AG04449 (cell line): ENCODE measurements at regions of chr1 and their contacts with region 1.

Region 1: GRCh38 chr1:225700164-225700740 is 47.3 kb upstream of the ENAH start:
- DNase-seq: peak; percentile 98
- H3K4me3 ChIP-seq: peak overlapping the region; percentile 7
- CTCF ChIP-seq: no peak

Region 2: DNA sequence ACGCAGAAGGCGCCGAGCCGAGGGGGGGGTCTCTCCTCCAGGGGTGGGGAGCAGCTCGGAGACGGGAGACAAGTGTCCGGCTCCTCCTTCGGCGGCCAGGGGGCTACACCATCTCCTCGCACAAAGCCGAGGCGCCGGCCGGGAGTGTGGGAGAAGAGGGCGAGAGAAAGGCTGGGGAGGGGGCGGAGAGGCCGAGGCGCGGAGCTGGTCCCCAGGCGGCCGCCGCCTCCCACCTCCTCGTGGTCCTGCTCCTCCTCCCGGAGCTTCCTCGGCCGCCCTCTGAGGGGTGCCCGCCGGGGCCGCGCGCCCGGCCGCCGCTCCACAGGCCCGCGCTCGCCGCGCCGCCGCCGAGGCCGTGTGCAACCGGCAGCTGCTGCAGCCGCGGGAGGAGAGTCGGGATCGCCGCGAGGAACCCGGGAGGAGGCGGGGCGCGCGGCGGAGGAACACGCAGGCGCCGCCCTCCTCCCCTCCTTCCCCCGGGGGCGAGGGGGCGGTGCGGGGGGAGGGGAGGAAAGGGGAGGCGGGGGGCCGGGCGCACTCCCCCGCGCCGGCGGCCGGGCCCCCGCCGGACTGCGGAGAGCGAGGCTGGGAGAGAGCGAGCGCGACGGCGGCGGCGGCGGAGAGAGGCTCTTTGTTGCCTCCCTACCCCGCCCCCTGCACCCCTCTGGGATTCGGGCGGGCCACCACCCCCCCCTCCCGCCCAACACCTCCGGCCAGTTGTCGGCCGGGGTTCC is 47.4 kb before region 1 on chr1 and contains the start of gene ENAH:
- CTCF ChIA-PET with region 1: no interaction called
- POLR2A ChIA-PET with region 1: interaction called, 15 read pairs
- DNase-seq: no peak
- H3K4me3 ChIP-seq: peak within 1 kb of the TSS; percentile 85
- CTCF ChIP-seq: no peak

Region 3: DNA sequence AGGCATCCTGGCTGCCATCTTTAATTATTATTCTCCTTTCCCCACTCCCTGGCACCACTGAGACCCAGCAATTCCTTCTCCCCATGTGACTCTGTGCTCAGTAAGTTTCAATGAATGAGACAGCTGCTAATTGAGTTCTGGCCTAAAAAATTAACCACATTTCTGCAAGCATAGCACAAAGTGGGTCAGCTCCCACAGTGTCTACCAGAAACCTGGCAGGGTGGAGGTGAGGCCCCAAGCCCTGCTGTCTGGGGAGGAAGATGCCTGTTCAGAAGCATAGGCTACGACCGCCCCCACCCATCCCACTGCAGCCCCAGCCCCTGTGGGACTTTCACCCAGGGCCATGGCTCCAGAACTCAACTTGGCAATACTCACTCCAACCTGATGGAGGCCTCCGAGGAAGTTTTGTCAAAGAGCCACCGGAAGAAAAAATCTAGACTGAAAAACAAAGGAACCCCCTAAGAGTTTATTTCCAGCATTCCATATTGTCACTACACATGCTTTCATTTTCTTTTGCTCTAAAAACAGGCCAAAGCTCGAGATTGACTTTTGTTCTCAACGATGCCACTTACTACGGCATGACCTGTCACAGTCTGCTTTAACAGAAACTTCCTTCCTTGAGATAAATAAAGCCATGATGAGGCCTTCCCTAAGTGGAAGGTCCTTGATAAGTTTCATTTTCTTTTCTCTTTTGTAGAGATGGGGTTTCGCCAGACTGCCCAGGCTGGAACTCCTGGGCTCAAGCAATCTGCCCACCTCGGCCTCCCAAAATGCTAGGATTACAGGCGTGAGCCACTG is 155.4 kb after region 1 on chr1:
- CTCF ChIA-PET with region 1: no interaction called
- POLR2A ChIA-PET with region 1: no interaction called
- DNase-seq: no peak
- H3K4me3 ChIP-seq: no peak overlapping the region
- CTCF ChIP-seq: no peak